ENCODE measurements at regions of chr10 and their contacts with region 1.

Region 1: DNA sequence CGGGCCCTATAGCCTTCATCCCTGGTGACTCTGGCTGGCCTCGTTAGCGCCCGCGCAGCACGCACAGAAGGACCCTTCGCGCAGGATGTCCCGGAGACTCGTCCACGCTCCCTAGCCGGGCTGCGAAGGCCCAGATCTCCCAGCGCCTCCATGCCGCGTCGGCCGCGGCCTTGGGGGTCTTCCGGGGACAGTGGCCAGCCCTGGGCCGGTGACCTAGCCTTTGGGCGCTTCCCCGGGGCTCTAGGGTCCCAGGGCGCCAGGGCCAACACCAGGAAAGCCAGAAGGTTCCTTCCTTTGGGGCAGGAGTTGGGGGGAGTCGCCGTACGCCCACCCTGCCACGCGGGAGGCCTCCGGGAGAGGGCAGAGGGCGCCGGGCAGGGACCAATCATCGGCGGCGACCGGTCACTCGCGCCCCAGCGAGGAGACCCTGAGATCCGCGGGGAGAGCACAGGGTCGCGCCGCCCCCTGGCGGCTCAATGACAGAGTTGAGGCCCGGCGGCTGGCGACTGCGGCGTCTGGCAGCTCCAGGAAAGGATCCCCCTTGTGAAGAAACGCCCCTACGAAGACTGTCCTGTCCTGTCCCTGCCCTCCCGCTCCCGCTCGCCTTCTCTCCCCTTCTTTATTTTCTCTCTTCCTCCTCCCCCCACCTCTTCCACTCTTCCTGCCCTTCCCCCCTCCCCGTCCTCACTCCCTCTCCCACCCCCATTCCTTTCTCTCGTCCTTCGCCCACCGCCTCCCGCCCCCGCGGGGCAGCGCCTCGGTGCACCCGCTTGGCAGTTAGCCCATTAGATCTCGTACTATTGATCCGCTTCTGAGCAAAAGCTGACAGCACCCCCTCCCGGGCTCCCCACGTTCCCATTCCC is 62.3 kb upstream of the LBX1 start:
- DNase-seq: peak; percentile 87
- ATAC-seq: peak; percentile 65
- H3K4me3 Mint-ChIP-seq: peak overlapping the region; percentile 80
- H3K27ac Mint-ChIP-seq: no peak overlapping the region
- H3K4me1 Mint-ChIP-seq: peaks cover 39% of the 10 kb centered on the region
- H3K27me3 Mint-ChIP-seq: peaks cover 97% of the 10 kb centered on the region
- CTCF ChIP-seq: peak; percentile 80

Region 2: DNA sequence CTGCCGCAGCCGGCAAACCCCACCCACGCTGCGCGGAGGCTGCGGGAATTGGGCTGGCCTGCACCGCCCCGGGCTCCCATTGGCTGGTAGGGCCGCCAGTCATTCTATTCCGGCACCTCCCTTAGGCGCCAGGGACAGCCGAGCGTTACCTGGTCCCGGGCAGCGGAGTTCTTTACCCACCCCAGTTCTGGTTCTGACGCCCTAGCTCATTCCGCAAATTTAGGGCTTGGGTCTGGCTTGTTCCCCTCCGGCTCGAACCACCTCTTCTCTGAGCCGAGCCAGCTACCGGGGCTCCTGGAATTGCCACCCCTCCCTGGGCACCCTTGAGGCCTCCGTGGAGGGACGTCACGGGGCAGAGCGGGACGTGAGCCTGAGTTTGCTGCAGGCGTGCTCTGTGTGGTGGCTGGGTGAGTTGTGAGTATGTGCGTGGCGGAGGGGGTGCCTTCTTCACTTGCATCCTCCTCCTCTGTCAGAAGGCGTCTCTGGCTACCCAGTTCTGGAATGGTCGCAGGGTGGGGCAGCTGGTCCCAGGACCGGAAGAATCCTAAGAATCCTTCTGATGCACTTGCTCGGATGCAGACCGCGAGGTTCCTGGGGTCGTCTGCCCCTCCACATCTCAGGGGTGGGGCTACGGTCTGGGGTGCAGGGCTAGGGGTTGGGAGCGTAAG is 260.3 kb before region 1 on chr10 and contains the starts of genes PDZD7 and SFXN3:
- CTCF ChIA-PET with region 1: no interaction called
- POLR2A ChIA-PET with region 1: no interaction called
- DNase-seq: peak; percentile 97
- ATAC-seq: peak; percentile 88
- H3K4me3 Mint-ChIP-seq: peak within 1 kb of the TSS; percentile 75
- H3K27ac Mint-ChIP-seq: no peak within 1 kb of the TSS
- H3K4me1 Mint-ChIP-seq: peaks cover 36% of the 10 kb centered on the region
- H3K27me3 Mint-ChIP-seq: peaks cover 55% of the 10 kb centered on the region
- CTCF ChIP-seq: no peak
- total RNA-seq, gene PDZD7: 1.9 to 2.7 TPM (median 2.6 TPM) in 3 replicates
- total RNA-seq, gene SFXN3: 2.5 to 5.6 TPM (median 3.2 TPM) in 3 replicates

Region 3: GRCh38 chr10:101161494-101162299 is 129.9 kb before region 1 on chr10:
- CTCF ChIA-PET with region 1: interaction called, 11 read pairs
- POLR2A ChIA-PET with region 1: no interaction called
- DNase-seq: peak; percentile 83
- ATAC-seq: peak; percentile 96
- H3K4me3 Mint-ChIP-seq: peak overlapping the region; percentile 55
- H3K27ac Mint-ChIP-seq: no peak overlapping the region; the same call in 1 of the 2 replicates
- H3K4me1 Mint-ChIP-seq: peaks cover 37% of the 10 kb centered on the region
- H3K27me3 Mint-ChIP-seq: peaks cover 52% of the 10 kb centered on the region
- CTCF ChIP-seq: peak; percentile 97

Region 4: DNA sequence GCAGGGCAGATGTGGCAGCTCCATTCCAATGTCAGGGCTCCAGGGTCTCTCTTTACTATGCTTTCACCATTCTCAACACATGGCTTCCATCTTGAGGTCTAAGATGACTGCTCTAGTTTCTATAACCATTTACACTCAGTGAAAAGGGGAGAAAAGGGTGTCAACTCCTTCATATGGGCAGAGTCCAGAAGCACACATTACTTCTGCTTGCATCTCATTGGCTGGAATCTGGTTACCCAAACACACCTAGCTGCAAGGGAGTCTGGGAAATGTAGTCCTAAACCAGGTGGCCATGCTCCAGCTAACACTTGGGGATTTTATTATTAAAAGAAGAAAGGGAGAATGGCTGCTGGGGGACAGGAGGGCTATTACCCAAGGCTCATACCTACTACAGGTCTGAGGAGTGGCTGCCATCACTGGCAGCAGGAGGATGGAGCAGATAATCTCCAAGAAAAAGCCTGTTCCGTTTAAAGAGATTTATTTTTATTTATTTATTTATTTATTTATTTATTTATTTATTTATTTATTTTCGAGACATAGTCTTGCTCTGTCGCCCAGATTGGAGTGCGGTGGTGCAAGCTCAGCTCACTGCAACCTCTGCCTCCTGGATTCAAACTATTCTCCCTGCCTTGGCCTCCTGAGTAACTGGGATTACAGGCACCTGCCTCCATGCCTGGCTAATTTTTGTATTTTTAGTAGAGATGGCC is 33.2 kb before region 1 on chr10:
- CTCF ChIA-PET with region 1: interaction called, 101 read pairs
- POLR2A ChIA-PET with region 1: no interaction called
- DNase-seq: no peak
- ATAC-seq: peak; percentile 64
- H3K4me3 Mint-ChIP-seq: no peak overlapping the region
- H3K27ac Mint-ChIP-seq: no peak overlapping the region
- H3K4me1 Mint-ChIP-seq: peaks cover 41% of the 10 kb centered on the region
- H3K27me3 Mint-ChIP-seq: peaks cover 25% of the 10 kb centered on the region
- CTCF ChIP-seq: no peak

Region 5: GRCh38 chr10:101311185-101312066 is 19.9 kb after region 1 on chr10:
- CTCF ChIA-PET with region 1: interaction called, 21 read pairs
- POLR2A ChIA-PET with region 1: no interaction called
- DNase-seq: peak; percentile 74
- ATAC-seq: peak; percentile 85
- H3K4me3 Mint-ChIP-seq: peak overlapping the region; percentile 52
- H3K27ac Mint-ChIP-seq: peak overlapping the region; percentile 50; the same call in 1 of the 2 replicates
- H3K4me1 Mint-ChIP-seq: peaks cover 23% of the 10 kb centered on the region
- H3K27me3 Mint-ChIP-seq: peaks cover 6% of the 10 kb centered on the region; the same call in 1 of the 2 replicates
- CTCF ChIP-seq: no peak

Region 6: GRCh38 chr10:101346177-101346576 is 54.6 kb after region 1 on chr10:
- CTCF ChIA-PET with region 1: no interaction called
- POLR2A ChIA-PET with region 1: no interaction called
- DNase-seq: no peak
- ATAC-seq: no peak
- H3K4me3 Mint-ChIP-seq: no peak overlapping the region
- H3K27ac Mint-ChIP-seq: no peak overlapping the region
- H3K4me1 Mint-ChIP-seq: no peaks in the 10 kb centered on the region
- H3K27me3 Mint-ChIP-seq: peaks cover 13% of the 10 kb centered on the region
- CTCF ChIP-seq: no peak

Region 7: DNA sequence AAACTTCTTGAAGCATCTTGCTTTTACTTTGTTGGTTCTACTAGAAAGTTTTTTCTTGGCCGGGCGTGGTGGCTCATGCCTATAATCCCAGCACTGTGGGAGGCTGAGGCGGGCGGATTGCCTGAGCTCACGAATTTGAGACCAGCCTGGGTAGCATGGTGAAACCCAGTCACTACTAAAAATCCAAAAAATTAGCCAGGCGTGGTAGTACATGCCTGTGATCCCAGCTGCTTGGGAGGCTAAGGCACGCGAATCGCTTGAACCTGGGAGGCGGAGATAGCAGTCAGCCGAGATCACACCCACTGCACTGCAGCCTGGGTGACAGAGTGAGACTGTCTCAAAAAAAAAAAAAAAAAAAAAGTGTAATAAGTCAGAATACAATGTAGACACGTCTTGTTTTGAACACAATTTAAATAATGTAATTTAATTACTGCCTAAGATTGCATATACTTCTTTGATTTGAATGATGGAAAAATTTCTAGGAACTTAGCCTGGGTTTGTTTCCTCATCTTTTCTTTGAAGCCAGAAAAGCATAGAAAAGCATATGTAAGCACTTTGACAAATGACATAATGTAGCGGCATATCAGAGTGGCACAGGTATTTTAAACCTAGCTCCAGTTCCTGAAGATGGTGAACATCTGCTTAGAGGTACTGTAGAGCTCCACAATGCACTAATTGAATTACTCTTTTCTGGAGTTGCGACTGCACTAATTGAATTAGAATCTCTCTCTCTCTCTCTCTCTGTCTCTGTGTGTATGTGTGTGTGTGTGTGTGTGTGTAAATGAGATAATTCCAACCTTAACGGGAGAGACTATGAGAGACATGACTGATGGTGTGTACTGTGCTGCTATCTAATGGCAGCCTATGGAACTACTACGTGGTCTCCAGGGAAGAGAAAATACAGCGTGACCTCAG is 150.2 kb after region 1 on chr10:
- CTCF ChIA-PET with region 1: interaction called, 86 read pairs
- POLR2A ChIA-PET with region 1: no interaction called
- DNase-seq: peak; percentile 17
- ATAC-seq: peak; percentile 98
- H3K4me3 Mint-ChIP-seq: no peak overlapping the region
- H3K27ac Mint-ChIP-seq: no peak overlapping the region
- H3K4me1 Mint-ChIP-seq: peaks cover 19% of the 10 kb centered on the region
- H3K27me3 Mint-ChIP-seq: no peaks in the 10 kb centered on the region
- CTCF ChIP-seq: no peak

Region 8: GRCh38 chr10:101495324-101495925 is 203.9 kb after region 1 on chr10:
- CTCF ChIA-PET with region 1: no interaction called
- POLR2A ChIA-PET with region 1: no interaction called
- DNase-seq: no peak
- ATAC-seq: peak; percentile 95
- H3K4me3 Mint-ChIP-seq: no peak overlapping the region
- H3K27ac Mint-ChIP-seq: no peak overlapping the region
- H3K4me1 Mint-ChIP-seq: peaks cover 26% of the 10 kb centered on the region
- H3K27me3 Mint-ChIP-seq: no peaks in the 10 kb centered on the region
- CTCF ChIP-seq: no peak